Activated CD8-positive, alpha-beta T cell treated with anti-CD3 and anti-CD28 coated beads for 36 hours (primary cell): ENCODE measurements at regions of chr20 and their contacts with region 1.

Region 1: DNA sequence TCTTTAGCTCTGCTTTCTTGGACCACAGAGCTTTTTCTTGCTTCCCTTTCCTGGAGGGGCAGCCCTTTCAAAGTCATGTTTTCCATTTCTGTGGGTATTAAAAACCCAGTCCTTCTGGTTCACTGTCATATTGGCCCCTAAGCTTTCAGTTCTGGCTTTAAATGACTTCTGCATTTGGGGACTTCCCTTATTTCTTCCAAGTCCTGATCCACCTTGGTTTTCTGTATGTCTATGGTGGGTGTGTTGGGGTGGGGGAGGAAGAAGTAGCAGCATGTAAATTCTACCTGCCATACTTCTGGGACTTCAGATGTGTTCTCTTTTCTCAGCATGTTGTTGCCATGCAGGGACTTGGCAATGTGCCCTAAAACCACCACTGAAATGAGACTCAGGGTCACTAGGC is 77.1 kb upstream of the EMILIN3 start:
- DNase-seq: peak; percentile 49
- ATAC-seq: peak; percentile 83
- H3K4me3 Mint-ChIP-seq: no peak overlapping the region
- H3K27ac Mint-ChIP-seq: peak overlapping the region; percentile 40
- H3K4me1 Mint-ChIP-seq: peaks cover 28% of the 10 kb centered on the region
- H3K27me3 Mint-ChIP-seq: no peaks in the 10 kb centered on the region
- CTCF ChIP-seq: no peak

Region 2: DNA sequence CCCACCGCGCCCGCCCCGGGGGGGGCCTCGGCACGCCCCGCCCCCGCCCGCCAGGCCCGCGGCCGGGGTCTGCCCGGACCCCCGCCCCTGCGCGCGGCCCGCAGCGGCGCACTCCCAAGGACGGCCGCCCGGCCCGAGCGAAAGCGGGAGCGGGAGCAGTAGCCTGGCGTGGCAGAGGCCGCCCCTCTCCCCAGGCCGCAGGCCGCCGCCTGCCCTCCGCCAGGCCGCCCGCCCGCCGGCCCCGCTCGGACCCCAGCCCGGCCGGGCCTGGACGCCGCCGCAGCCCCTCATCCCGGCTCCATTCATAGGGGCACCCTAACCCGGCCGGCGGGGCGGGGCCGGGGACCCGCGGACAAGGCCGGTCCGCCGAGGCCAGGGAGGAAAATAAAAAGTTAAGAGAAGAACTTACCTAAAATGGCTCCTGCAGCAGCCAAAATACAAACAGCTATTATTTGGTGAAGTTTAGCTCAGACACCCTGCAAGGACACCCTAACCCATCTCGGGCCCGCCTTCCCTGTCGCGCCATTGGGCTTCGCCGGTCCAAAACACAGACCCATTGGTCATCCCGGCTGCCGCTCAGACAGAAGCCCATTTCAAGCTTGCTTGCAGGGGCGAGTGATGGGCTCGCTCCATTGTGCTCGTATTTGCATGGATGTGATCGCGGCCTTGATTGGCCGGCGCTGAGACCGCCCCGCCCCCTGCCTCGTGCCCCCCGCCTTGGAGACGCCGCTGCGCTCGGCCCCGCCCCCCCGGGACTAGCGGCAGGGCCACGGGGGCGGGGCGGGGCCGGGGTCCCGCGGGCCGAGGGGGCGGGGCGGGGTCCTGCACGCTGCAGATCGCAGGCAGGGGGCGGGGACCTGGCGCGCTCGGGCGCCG is 174.5 kb after region 1 on chr20 and contains the start of gene CHD6:
- CTCF ChIA-PET with region 1: no interaction called
- POLR2A ChIA-PET with region 1: no interaction called
- intact Hi-C with region 1: loop called (anchors 10 kb)
- DNase-seq: peak; percentile 99
- ATAC-seq: peak; percentile 99
- H3K4me3 Mint-ChIP-seq: peak within 1 kb of the TSS; percentile 78
- H3K27ac Mint-ChIP-seq: peak within 1 kb of the TSS; percentile 81
- H3K4me1 Mint-ChIP-seq: peaks cover 42% of the 10 kb centered on the region
- H3K27me3 Mint-ChIP-seq: no peaks in the 10 kb centered on the region
- CTCF ChIP-seq: no peak
- total RNA-seq, gene CHD6: 25.4 to 28.2 TPM